ENCODE measurements at regions of chr16 and their contacts with region 1.

Region 1: DNA sequence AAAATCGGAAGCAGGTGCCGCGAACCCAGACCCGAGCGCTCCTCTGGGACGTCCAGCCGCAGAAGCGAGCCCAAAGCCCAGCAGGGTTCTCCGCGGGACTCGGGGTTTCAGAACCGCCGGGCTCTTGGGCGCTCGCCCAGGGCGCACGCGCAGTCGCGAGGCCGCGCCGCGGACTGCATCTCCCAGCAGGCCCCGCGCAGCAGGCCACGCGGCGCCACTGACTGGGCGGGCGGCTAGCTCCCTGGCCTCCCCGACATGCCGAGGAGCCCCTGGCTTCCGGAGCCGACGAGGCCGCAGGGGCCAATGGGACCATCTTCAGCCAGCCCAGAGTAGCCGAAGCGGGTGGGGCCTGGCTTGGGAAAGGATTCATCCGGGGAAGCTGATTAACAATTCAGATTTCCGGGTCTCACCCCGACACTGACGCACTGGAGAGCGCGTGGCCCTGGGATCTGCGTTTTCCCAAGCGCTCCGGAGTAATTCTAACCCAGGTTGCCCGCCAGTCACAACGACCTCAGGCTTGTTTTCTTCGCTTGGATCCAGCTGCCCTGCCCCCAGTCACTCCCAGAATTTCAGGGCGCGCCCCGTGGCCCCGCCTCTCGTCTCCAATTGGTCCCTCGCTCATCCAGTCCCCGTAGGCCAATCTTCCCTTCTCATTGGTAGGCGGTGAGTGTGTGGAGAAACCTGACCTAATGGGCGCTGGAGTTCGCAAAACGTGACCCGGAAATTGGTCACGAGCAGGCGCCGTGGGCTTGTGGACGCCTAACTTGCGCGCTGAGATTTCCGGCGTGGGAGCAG is at the start of gene ZNF263:
- DNase-seq: peak; percentile 95
- ATAC-seq: peak; percentile 89
- H3K4me3 Mint-ChIP-seq: peak within 1 kb of the TSS; percentile 94
- H3K27ac Mint-ChIP-seq: peak within 1 kb of the TSS; percentile 98
- H3K4me1 Mint-ChIP-seq: peaks cover 27% of the 10 kb centered on the region
- H3K27me3 Mint-ChIP-seq: no peaks in the 10 kb centered on the region
- CTCF ChIP-seq: no peak
- total RNA-seq, gene ZNF263: 19.5 to 22.0 TPM

Region 2: DNA sequence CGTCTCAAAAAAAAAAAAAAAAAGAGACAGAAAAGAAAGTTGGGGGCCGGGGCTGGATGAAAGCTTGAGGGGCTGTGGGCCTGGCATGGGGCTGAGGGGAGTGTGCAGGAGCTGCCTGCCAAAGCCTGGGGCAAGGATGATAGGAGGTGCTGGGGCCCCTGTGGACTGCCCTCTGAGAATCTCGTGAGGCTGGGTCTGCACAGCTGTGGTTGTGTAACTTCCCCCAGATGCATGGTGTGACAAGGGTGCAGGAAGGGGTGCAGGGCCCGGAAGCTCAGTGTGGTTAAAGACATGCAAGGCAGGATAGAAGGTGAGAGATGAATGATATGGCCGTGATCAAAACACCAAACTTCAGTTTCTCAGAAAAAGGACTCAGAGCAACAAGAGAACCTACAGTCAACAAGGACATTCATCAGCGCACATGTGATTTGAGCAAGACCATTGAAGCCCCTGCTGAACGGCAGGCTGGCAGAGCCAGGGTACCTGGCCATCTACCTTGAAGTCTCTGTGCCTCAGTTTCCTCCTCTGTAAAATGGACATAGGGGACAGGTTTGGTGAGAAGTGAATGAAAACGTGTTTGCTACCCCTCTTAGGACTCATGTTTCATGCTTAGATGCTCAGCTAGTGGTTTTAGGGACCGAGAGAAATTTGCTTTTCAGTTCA is 207.9 kb before region 1 on chr16:
- CTCF ChIA-PET with region 1: no interaction called
- POLR2A ChIA-PET with region 1: no interaction called
- intact Hi-C with region 1: no loop called
- DNase-seq: peak; percentile 93
- ATAC-seq: peak; percentile 75
- H3K4me3 Mint-ChIP-seq: peak overlapping the region; percentile 60
- H3K27ac Mint-ChIP-seq: peak overlapping the region; percentile 97
- H3K4me1 Mint-ChIP-seq: peaks cover 75% of the 10 kb centered on the region
- H3K27me3 Mint-ChIP-seq: no peaks in the 10 kb centered on the region
- CTCF ChIP-seq: no peak

Region 3: GRCh38 chr16:3246002-3246401 is 36.9 kb before region 1 on chr16:
- CTCF ChIA-PET with region 1: no interaction called
- POLR2A ChIA-PET with region 1: no interaction called
- intact Hi-C with region 1: no loop called
- DNase-seq: no peak
- ATAC-seq: no peak
- H3K4me3 Mint-ChIP-seq: no peak overlapping the region
- H3K27ac Mint-ChIP-seq: no peak overlapping the region
- H3K4me1 Mint-ChIP-seq: peaks cover 5% of the 10 kb centered on the region
- H3K27me3 Mint-ChIP-seq: peaks cover 1% of the 10 kb centered on the region
- CTCF ChIP-seq: no peak

Region 4: GRCh38 chr16:3264137-3265036 is 18.5 kb before region 1 on chr16:
- CTCF ChIA-PET with region 1: interaction called, 98 read pairs
- POLR2A ChIA-PET with region 1: interaction called, 25 read pairs
- intact Hi-C with region 1: no loop called
- DNase-seq: peak; percentile 99
- ATAC-seq: peak; percentile 91
- H3K4me3 Mint-ChIP-seq: peak overlapping the region; percentile 76
- H3K27ac Mint-ChIP-seq: peak overlapping the region; percentile 92
- H3K4me1 Mint-ChIP-seq: peaks cover 42% of the 10 kb centered on the region
- H3K27me3 Mint-ChIP-seq: no peaks in the 10 kb centered on the region
- CTCF ChIP-seq: no peak

Region 5: GRCh38 chr16:3305109-3306068 is 22.5 kb after region 1 on chr16 and contains the starts of genes TIGD7 and ZNF75A:
- CTCF ChIA-PET with region 1: interaction called, 3 read pairs
- POLR2A ChIA-PET with region 1: interaction called, 24 read pairs
- intact Hi-C with region 1: no loop called
- DNase-seq: peak; percentile 87
- ATAC-seq: peak; percentile 97
- H3K4me3 Mint-ChIP-seq: peak within 1 kb of the TSS; percentile 83
- H3K27ac Mint-ChIP-seq: peak within 1 kb of the TSS; percentile 90
- H3K4me1 Mint-ChIP-seq: peaks cover 23% of the 10 kb centered on the region
- H3K27me3 Mint-ChIP-seq: no peaks in the 10 kb centered on the region
- CTCF ChIP-seq: peak; percentile 19
- total RNA-seq, gene TIGD7: 4.0 to 4.7 TPM
- total RNA-seq, gene ZNF75A: 21.2 to 21.7 TPM

Region 6: GRCh38 chr16:3457434-3458252 is 174.7 kb after region 1 on chr16:
- CTCF ChIA-PET with region 1: interaction called, 4 read pairs
- POLR2A ChIA-PET with region 1: interaction called, 3 read pairs
- intact Hi-C with region 1: loop called (anchors 5 kb)
- DNase-seq: peak; percentile 89
- ATAC-seq: peak; percentile 89
- H3K4me3 Mint-ChIP-seq: peak overlapping the region; percentile 86
- H3K27ac Mint-ChIP-seq: peak overlapping the region; percentile 94
- H3K4me1 Mint-ChIP-seq: peaks cover 40% of the 10 kb centered on the region
- H3K27me3 Mint-ChIP-seq: no peaks in the 10 kb centered on the region
- CTCF ChIP-seq: peak; percentile 40